Aorta (tissue), 5 donors: ENCODE measurements at regions of chr11 and their contacts with region 1.

Region 1: GRCh38 chr11:110195845-110196754 is 100.3 kb downstream of the RDX start:
- DNase-seq: no peak
- ATAC-seq: no peak
- H3K4me3 ChIP-seq: no peak overlapping the region
- H3K27ac ChIP-seq: no peak overlapping the region
- H3K4me1 ChIP-seq: no peaks in the 10 kb centered on the region
- H3K27me3 ChIP-seq: no peaks in the 10 kb centered on the region

Region 2: GRCh38 chr11:109956124-109956793 is 239.8 kb before region 1 on chr11:
- intact Hi-C with region 1: loop called in 1 of 2 experiments (anchors 10 kb)
- DNase-seq: no peak
- ATAC-seq: no peak
- H3K4me3 ChIP-seq: no peak overlapping the region
- H3K27ac ChIP-seq: no peak overlapping the region
- H3K4me1 ChIP-seq: no peaks in the 10 kb centered on the region
- H3K27me3 ChIP-seq: no peaks in the 10 kb centered on the region

Region 3: DNA sequence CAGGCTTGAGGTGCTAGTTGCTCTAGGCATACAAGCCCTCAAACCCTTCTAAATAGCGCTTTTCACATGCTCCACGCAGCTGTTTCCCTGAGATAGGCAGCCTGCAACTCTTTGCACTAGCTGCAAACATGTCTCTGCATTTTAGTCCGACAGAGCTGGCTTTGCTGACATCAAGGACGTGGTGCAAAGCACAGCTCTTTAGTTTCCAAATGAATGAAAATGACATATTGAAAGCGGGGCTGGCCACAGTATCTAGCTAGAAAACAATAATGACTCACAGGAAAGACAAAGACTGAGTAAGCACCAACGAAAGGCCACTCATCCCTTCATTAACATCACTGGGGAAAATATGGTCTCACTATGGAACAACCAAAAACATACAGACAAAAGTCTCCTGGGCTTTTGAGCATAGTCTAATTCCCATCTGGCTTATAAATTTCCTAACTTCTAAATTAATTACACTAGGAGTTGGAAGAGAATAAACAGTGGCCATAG is 118.2 kb before region 1 on chr11:
- intact Hi-C with region 1: no loop called
- DNase-seq: no peak
- ATAC-seq: no peak
- H3K4me3 ChIP-seq: no peak overlapping the region
- H3K27ac ChIP-seq: no peak overlapping the region
- H3K4me1 ChIP-seq: no peaks in the 10 kb centered on the region
- H3K27me3 ChIP-seq: peaks cover 0 to 2% of the 10 kb centered on the region in 2 donors

Region 4: GRCh38 chr11:110141812-110142211 is 54.3 kb before region 1 on chr11:
- intact Hi-C with region 1: no loop called
- DNase-seq: no peak
- ATAC-seq: no peak
- H3K4me3 ChIP-seq: no peak overlapping the region
- H3K27ac ChIP-seq: no peak overlapping the region
- H3K4me1 ChIP-seq: peaks cover 0 to 3% of the 10 kb centered on the region in 2 donors
- H3K27me3 ChIP-seq: no peaks in the 10 kb centered on the region

Region 5: DNA sequence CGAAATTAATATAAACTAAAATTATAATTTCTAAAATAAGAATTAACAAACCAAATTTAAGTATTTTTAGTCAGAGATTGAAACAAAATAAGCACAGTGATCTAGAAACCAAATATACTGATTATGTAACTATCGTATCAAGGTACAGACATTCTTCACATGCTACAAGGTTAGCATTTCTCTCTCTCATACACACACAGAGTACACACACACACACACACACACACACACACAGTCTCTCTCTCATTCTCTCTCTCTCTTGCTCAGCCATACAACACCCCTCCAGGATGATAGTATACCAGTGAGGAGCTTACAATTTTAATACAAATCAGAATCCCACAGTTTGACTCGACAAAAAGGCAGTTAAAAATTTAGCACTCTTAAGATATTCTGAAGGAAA is 34.3 kb after region 1 on chr11:
- intact Hi-C with region 1: no loop called
- DNase-seq: no peak
- ATAC-seq: no peak
- H3K4me3 ChIP-seq: no peak overlapping the region
- H3K27ac ChIP-seq: no peak overlapping the region
- H3K4me1 ChIP-seq: no peaks in the 10 kb centered on the region
- H3K27me3 ChIP-seq: no peaks in the 10 kb centered on the region

Region 6: GRCh38 chr11:110376711-110377324 is 180.7 kb after region 1 on chr11:
- intact Hi-C with region 1: loop called (anchors 2 kb)
- DNase-seq: peak in 1 of 2 donors; percentile 75
- ATAC-seq: peak; percentile 82
- H3K4me3 ChIP-seq: no peak overlapping the region
- H3K27ac ChIP-seq: peak overlapping the region in 1 of 2 donors; percentile 26
- H3K4me1 ChIP-seq: no peaks in the 10 kb centered on the region
- H3K27me3 ChIP-seq: no peaks in the 10 kb centered on the region

Region 7: DNA sequence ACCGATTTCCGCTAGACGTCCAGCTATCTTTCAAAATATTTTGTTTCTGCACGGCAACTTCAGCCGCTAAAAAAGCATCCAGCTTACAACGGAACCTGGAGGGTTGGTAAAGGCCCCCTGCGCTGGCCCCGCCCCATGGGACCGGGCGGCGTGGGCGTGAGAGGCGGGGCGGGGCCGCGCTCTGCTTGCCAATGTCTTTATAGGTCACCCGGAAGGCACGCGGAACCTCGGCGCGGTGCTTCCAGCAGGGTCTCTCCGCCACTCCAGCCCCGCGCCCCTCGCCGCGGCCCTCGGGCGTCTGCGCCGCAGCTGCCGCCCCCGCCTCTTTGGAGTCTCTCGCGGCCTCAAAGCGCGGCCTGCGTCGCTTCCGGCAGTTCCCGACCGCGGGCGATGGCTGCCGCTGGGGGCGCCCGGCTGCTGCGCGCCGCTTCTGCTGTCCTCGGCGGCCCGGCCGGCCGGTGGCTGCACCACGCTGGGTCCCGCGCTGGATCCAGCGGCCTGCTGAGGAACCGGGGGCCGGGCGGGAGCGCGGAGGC is 233.7 kb after region 1 on chr11 and contains the start of gene FDX1:
- intact Hi-C with region 1: loop called (anchors 5 kb)
- DNase-seq: peak; percentile 89 to 93
- ATAC-seq: peak; percentile 90
- H3K4me3 ChIP-seq: peak within 1 kb of the TSS; percentile 81 to 88
- H3K27ac ChIP-seq: peak within 1 kb of the TSS; percentile 19 to 41
- H3K4me1 ChIP-seq: peaks cover 0 to 3% of the 10 kb centered on the region in 2 donors
- H3K27me3 ChIP-seq: no peaks in the 10 kb centered on the region
- total RNA-seq, gene FDX1: 8.0 to 8.9 TPM

Region 8: DNA sequence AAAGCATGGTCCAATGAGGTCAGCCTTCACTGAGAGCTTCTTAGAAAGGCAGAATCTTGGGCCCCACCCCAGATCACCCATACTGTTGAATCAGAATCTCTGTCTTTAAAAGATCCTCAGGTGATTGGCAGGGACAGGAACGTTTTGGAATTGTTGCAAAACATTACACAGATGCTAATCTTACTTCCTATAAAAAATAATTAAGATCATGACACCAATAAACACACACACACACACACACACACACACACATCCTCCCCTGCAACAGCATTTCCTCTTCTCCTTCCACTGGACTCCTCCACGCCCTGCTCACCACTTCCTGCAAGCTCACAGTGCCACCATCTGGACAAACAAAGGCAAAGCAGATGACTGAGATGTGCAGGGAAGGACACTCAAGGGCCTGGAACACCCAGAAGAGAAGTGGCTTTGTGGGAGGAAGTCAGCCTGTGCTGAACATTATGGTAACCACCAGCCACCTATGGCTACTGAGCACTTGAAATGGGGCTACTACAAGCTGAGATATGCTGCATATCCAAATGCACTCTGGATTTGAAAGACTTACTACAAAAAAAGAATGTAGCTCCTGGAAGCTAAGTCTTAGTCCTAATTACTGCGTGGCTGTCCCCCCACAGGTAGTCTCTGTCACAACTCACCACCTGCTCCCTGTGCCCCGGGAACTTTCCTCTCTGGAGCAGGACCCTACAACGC is 1250.5 kb after region 1 on chr11:
- intact Hi-C with region 1: loop called in 1 of 2 experiments (anchors 10 kb)
- DNase-seq: peak in 1 of 2 donors; percentile 85
- ATAC-seq: peak; percentile 88
- H3K4me3 ChIP-seq: no peak overlapping the region
- H3K27ac ChIP-seq: no peak overlapping the region
- H3K4me1 ChIP-seq: no peaks in the 10 kb centered on the region
- H3K27me3 ChIP-seq: no peaks in the 10 kb centered on the region